ENCODE measurements at regions of chr1 and their contacts with region 1.

Region 1: DNA sequence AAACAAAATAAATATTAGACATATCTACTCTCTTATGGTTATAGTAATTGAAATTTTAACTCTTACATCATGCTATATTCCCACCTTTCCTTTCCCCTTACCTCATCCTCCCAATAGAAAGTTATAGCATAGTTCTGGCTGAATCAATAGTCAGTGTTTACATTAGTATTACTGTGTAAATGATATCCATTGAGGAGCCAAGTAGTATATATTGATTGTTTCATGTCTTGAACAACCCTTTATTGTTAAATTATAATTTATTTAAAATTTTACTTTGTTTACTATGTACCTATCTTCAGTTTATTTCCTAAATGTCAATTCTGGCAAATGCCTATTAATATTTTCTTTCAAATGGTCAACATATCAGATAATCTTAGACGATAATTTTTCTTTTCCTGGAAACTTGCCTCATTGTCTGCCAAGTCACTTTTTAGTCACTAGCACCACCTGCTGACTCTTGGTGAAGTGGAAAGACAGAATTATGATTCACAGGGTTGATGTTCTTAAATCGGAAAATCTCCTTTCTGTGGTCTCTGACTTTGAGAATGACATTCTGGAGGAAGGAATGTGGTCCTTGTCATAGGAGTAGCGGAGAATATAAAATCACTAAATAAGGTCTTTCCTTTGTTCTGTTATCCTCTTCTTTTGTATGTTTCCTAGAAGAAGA is 8.7 kb downstream of the HJV start:
- DNase-seq: no peak
- ATAC-seq: peak; percentile 79
- H3K4me3 ChIP-seq: no peak overlapping the region
- H3K27ac ChIP-seq: no peak overlapping the region
- H3K4me1 ChIP-seq: no peaks in the 10 kb centered on the region
- H3K27me3 ChIP-seq: no peaks in the 10 kb centered on the region

Region 2: GRCh38 chr1:145845514-145846161 is 167.2 kb before region 1 on chr1 and contains the start of gene NUDT17:
- intact Hi-C with region 1: loop called (anchors 5 kb)
- DNase-seq: peak; percentile 88 to 95
- ATAC-seq: peak; percentile 94
- H3K4me3 ChIP-seq: peak within 1 kb of the TSS; percentile 4 to 12
- H3K27ac ChIP-seq: peak within 1 kb of the TSS in 1 of 2 donors; percentile 66
- H3K4me1 ChIP-seq: no peaks in the 10 kb centered on the region
- H3K27me3 ChIP-seq: no peaks in the 10 kb centered on the region
- total RNA-seq, gene NUDT17: 1.2 to 2.7 TPM

Region 3: GRCh38 chr1:145891587-145892485 is 121.0 kb before region 1 on chr1:
- intact Hi-C with region 1: loop called in 1 of 2 experiments (anchors 10 kb)
- DNase-seq: peak; percentile 94 to 96
- ATAC-seq: peak; percentile 93
- H3K4me3 ChIP-seq: no peak overlapping the region
- H3K27ac ChIP-seq: peak overlapping the region; percentile 91 to 100
- H3K4me1 ChIP-seq: peaks cover 6% of the 10 kb centered on the region in 2 donors
- H3K27me3 ChIP-seq: no peaks in the 10 kb centered on the region

Region 4: DNA sequence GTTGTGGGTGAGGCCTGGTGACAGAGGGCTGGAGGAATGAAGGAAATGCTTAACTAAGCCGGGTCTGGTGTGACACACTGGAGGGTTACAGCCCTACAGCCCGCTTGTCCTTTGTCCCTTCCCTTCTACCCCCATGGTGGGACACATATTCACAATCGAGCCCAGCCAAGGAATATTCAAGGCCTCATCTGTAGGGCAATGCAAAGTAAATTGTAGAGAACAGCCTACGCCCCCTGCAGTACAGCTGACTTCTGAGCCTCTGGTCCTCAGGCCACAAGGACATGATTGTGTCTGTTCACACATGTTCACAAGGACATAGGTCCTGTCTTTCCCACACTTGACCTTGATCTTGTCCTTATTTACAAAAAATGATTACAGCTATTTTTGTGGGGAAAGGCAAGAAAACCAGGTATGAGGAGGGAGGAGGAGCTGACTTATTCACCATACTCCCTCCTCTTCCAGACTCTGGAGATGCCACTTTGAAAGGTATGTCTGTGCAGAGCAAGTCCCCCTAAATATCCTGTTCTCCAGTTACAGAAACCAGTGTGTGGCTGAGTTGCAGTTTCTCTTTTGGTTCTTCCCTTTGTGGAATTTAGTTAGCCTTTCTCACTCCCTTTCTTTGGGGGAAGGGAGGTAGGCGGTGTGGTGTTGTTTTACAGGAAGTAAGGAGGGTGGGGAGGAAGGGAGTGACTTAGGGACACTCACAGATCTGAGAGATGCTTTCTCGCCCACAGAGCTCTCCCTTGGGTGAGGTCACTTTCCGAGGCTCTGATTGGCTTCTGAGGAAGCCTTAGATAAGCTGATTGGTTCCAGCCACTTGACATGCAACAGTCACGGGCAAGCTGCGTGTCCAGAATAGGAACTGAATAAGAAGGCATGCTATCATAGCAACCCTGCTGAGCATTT is 33.8 kb before region 1 on chr1:
- intact Hi-C with region 1: no loop called
- DNase-seq: peak; percentile 92 to 95
- ATAC-seq: peak; percentile 95
- H3K4me3 ChIP-seq: no peak overlapping the region
- H3K27ac ChIP-seq: peak overlapping the region; percentile 91 to 100
- H3K4me1 ChIP-seq: peaks cover 6 to 14% of the 10 kb centered on the region in 2 donors
- H3K27me3 ChIP-seq: no peaks in the 10 kb centered on the region